Endothelial cell of umbilical vein (primary cell): ENCODE measurements at regions of chr1 and their contacts with region 1.

Region 1: GRCh38 chr1:178434360-178434759 is 62.4 kb downstream of the CLEC20A start:
- DNase-seq: no peak
- H3K4me3 ChIP-seq: no peak overlapping the region
- H3K27ac ChIP-seq: no peak overlapping the region
- H3K4me1 ChIP-seq: no peaks in the 10 kb centered on the region
- H3K27me3 ChIP-seq: no peaks in the 10 kb centered on the region
- CTCF ChIP-seq: no peak
- POLR2A ChIP-seq: no peak

Region 2: GRCh38 chr1:178451529-178451928 is 17.2 kb after region 1 on chr1:
- CTCF ChIA-PET with region 1: interaction called, 3 read pairs
- POLR2A ChIA-PET with region 1: no interaction called
- dilution Hi-C with region 1: no loop called
- intact Hi-C with region 1: loop called (anchors 2 kb)
- DNase-seq: no peak
- H3K4me3 ChIP-seq: no peak overlapping the region
- H3K27ac ChIP-seq: no peak overlapping the region
- H3K4me1 ChIP-seq: no peaks in the 10 kb centered on the region
- H3K27me3 ChIP-seq: no peaks in the 10 kb centered on the region
- CTCF ChIP-seq: no peak
- POLR2A ChIP-seq: no peak